CD4-positive, alpha-beta memory T cell (primary cell): ENCODE measurements at regions of chr10 and their contacts with region 1.

Region 1: DNA sequence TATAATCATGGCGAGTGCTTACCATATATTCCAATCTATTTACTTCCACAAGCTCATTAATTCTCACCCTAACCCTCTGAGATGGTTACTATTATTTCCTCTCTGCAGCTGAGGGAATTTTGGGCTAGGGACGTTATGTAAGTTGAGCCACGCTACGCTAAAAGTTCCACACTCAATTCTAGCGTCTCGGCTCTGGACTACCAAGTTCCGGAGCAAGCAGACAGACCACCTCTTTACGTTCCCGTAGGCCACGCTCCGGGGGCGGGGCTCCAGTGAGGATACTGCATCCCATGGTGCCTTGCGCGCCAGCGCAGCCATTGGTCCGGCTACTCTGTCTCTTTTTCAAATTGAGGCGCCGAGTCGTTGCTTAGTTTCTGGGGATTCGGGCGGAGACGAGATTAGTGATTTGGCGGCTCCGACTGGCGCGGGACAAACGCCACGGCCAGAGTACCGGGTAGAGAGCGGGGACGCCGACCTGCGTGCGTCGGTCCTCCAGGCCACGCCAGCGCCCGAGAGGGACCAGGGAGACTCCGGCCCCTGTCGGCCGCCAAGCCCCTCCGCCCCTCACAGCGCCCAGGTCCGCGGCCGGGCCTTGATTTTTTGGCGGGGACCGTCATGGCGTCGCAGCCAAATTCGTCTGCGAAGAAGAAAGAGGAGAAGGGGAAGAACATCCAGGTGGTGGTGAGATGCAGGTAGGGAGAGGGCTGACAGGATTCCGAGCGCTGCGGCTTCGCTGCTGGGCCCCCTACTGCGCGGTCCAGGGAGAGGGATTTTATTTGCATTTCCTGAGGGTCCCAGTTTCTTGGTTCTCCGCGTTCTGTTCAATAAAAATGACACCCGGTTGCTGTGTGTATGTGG is at the start of gene KIF11:
- DNase-seq: peak; percentile 93 to 97 (median 93)
- H3K4me3 ChIP-seq: peak within 1 kb of the TSS; percentile 65 to 76
- H3K4me3 Mint-ChIP-seq: peak within 1 kb of the TSS; percentile 93 to 99 (median 98)
- H3K27ac ChIP-seq: peak within 1 kb of the TSS; percentile 85
- H3K27ac Mint-ChIP-seq: peak within 1 kb of the TSS; percentile 99 to 100 (median 100)
- H3K4me1 ChIP-seq: peaks cover 49% of the 10 kb centered on the region
- H3K4me1 Mint-ChIP-seq: peaks cover 27 to 63% (median 36%) of the 10 kb centered on the region in 4 donors
- H3K27me3 ChIP-seq: no peaks in the 10 kb centered on the region
- H3K27me3 Mint-ChIP-seq: no peaks in the 10 kb centered on the region
- total RNA-seq, gene KIF11: 2.0 to 2.1 TPM

Region 2: DNA sequence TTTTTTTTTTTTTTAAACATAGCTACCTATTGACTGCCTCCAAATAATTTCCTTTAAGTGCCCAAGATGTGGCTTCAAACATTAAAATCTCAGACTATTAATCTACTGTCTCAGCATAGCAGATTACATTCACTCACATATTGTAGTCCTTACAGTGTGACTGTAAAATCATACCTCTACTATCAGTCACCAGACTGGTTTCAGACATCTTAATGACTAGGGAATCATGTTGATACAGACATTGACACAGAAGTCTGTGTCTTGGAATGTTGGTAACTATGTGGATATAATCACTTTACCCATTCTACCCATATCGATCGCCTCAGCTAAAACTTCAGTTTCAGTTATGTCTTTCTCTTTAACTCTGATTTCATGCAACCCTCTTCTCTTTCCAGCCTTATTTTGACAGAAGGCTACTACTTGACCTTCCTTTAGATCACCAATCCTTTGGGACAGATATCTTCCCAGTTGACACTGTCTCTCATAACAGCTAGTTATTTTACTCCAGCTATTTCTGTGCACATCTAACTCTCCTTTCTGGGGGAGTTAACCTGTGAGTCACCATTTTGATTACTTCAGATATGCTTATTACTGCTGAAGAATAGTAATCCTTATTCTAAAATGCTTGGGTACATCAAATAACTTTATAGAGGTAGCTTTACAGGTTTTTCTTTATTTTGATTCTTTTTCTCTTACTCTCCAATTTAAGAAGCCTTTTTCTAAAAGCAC is 787.7 kb before region 1 on chr10:
- CTCF ChIA-PET with region 1: no interaction called
- POLR2A ChIA-PET with region 1: no interaction called
- intact Hi-C with region 1: no loop called
- DNase-seq: no peak
- H3K4me3 ChIP-seq: no peak overlapping the region
- H3K4me3 Mint-ChIP-seq: peak overlapping the region in 4 of 8 donors; percentile 0 to 46 (median 16)
- H3K27ac ChIP-seq: no peak overlapping the region
- H3K27ac Mint-ChIP-seq: peak overlapping the region in 5 of 7 donors; percentile 1 to 48 (median 33)
- H3K4me1 ChIP-seq: peaks cover 55% of the 10 kb centered on the region
- H3K4me1 Mint-ChIP-seq: peaks cover 57 to 88% (median 69%) of the 10 kb centered on the region in 4 donors
- H3K27me3 ChIP-seq: no peaks in the 10 kb centered on the region
- H3K27me3 Mint-ChIP-seq: no peaks in the 10 kb centered on the region

Region 3: DNA sequence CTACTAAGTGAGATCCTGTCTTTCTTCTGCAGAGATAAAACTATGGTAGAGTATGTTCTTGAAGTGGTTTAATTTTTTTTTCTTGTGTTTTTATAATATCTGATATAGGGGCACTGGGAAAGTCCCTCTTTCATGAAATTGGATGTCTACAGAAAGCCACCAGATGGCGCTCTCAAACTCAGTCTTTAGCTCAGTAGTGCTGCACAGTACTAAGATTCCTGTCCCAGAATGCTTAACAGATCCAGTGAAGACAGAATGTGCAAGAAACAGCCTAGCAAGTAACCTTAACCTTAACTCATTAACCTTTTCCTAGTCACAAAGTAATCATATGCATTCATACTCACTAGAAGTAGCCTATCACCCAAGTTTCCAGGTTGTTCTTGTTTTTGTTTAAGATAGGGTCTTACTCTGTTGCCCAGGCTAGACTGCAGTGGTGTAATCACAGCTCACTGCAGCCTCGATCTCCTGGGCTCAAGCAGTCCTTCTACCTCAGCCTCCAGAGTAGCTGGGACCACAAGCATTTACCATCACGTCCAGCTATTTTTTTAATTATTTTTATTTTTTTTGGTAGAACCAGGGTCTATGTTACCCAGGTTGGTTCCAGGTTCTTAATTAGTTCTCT is 75.8 kb before region 1 on chr10:
- CTCF ChIA-PET with region 1: interaction called, 4 read pairs
- POLR2A ChIA-PET with region 1: interaction called, 11 read pairs
- intact Hi-C with region 1: loop called (anchors 1 kb)
- DNase-seq: peak; percentile 68 to 75 (median 72)
- H3K4me3 ChIP-seq: no peak overlapping the region
- H3K4me3 Mint-ChIP-seq: no peak overlapping the region
- H3K27ac ChIP-seq: no peak overlapping the region
- H3K27ac Mint-ChIP-seq: peak overlapping the region in 5 of 7 donors; percentile 31 to 56 (median 53)
- H3K4me1 ChIP-seq: peaks cover 8% of the 10 kb centered on the region
- H3K4me1 Mint-ChIP-seq: peaks cover 6 to 8% (median 7%) of the 10 kb centered on the region in 4 donors
- H3K27me3 ChIP-seq: no peaks in the 10 kb centered on the region
- H3K27me3 Mint-ChIP-seq: no peaks in the 10 kb centered on the region

Region 4: DNA sequence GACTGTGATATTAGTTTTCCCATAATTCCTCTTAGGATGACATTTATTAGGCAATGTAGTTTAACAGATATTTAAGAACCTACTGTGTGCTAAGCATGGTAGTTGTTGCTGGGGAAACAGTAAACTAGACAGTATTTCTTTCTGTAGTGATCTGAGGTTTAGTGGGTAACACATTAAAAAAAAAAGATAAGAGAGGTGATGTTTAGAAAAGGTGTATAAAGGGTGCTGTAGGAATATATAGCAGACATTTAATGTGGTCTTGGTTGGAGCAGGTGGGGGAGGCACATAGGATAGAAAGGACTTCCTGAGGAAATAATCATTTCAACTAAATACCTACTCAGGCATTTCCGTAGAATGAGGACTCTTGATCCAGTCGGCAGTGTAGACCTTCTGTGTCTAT is 11.9 kb after region 1 on chr10:
- CTCF ChIA-PET with region 1: interaction called, 5 read pairs
- POLR2A ChIA-PET with region 1: interaction called, 30 read pairs
- intact Hi-C with region 1: no loop called
- DNase-seq: no peak
- H3K4me3 ChIP-seq: no peak overlapping the region
- H3K4me3 Mint-ChIP-seq: peak overlapping the region in 4 of 8 donors; percentile 0 to 40 (median 4)
- H3K27ac ChIP-seq: peak overlapping the region; percentile 9
- H3K27ac Mint-ChIP-seq: peak overlapping the region in 5 of 7 donors; percentile 1 to 85 (median 26)
- H3K4me1 ChIP-seq: peaks cover 42% of the 10 kb centered on the region
- H3K4me1 Mint-ChIP-seq: peaks cover 28 to 37% (median 32%) of the 10 kb centered on the region in 4 donors
- H3K27me3 ChIP-seq: no peaks in the 10 kb centered on the region
- H3K27me3 Mint-ChIP-seq: no peaks in the 10 kb centered on the region

Region 5: DNA sequence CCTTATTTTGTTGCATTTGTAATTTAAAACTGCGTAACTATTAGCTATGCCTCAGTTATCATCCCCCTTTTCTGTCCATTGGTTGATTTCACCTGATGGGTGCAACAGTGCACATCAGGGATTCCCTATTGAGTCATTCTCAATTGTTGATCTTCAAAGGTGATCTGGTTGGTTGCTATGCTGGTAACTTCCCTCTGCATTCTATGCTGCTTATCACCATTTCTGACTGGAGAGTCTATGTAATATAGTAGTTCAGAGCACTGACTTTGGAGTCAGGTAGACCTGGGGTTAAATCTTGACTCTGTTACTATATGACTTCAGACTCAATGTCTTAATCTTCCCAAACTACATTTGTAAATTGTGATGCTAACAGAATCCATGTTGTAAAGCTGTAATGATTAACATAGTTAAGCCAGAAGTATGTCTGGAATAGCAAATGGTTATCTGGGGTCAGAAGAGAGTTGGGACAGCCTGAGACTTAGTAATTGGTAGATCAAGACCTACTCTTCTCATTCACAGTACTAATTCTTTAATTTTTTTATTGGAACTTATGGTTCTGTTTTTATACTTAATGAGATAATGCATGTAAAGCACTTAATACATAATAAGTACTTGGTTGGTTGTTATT is 293.5 kb after region 1 on chr10:
- CTCF ChIA-PET with region 1: no interaction called
- POLR2A ChIA-PET with region 1: no interaction called
- intact Hi-C with region 1: loop called (anchors 5 kb)
- DNase-seq: no peak
- H3K4me3 ChIP-seq: no peak overlapping the region
- H3K4me3 Mint-ChIP-seq: no peak overlapping the region
- H3K27ac ChIP-seq: no peak overlapping the region
- H3K27ac Mint-ChIP-seq: peak overlapping the region in 1 of 7 donors; percentile 81
- H3K4me1 ChIP-seq: no peaks in the 10 kb centered on the region
- H3K4me1 Mint-ChIP-seq: peaks cover 0 to 9% (median 7%) of the 10 kb centered on the region in 4 donors
- H3K27me3 ChIP-seq: no peaks in the 10 kb centered on the region
- H3K27me3 Mint-ChIP-seq: no peaks in the 10 kb centered on the region

Region 6: DNA sequence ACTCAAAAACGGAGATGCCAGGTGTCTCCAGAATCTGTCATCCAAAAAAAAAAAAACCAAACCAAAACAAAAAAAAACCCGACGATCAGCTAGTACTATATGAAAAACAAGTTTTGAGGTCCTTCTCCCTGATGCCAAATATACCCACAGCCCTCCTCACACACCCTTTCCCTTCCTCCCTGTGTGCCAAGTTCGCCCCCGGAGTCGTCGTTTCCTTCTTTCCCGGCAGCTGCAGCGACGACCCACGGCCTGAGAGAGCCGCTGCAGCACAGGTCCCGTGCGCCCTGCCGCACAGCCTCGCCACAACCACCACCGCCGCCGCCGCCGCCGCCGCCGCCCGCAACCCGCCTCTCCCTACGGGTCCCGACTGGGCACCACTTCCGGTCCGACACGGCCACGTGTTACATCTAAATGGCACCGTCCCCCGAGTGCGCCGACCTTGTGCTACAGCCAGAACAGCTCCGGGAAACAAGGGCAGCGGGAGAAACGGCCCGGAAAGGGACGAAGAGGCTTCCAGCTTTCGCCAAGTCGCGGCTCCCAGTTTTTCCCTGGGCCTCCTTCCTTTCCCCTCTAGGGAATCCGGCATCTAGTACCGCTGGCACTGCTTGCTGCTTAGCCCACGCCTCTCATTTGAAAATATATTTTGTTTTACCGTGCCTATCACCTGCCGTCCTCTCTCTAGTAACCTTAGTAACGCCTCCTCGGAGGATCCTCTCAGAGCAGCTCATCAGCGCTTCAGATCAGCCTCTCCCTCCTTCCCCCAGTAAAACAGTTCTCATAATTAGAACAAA is 1109.4 kb after region 1 on chr10 and contains the start of gene FRA10AC1:
- CTCF ChIA-PET with region 1: no interaction called
- POLR2A ChIA-PET with region 1: interaction called, 5 read pairs
- intact Hi-C with region 1: loop called (anchors 5 kb)
- DNase-seq: peak; percentile 83 to 89 (median 84)
- H3K4me3 ChIP-seq: peak within 1 kb of the TSS; percentile 78 to 100
- H3K4me3 Mint-ChIP-seq: no peak within 1 kb of the TSS
- H3K27ac ChIP-seq: peak within 1 kb of the TSS; percentile 63
- H3K27ac Mint-ChIP-seq: no peak within 1 kb of the TSS
- H3K4me1 ChIP-seq: peaks cover 28% of the 10 kb centered on the region
- H3K4me1 Mint-ChIP-seq: peaks cover 6 to 23% (median 16%) of the 10 kb centered on the region in 4 donors
- H3K27me3 ChIP-seq: no peaks in the 10 kb centered on the region
- H3K27me3 Mint-ChIP-seq: no peaks in the 10 kb centered on the region
- total RNA-seq, gene FRA10AC1: 21.6 to 32.5 TPM